ENCODE measurements at regions of chr11 and their contacts with region 1.

Region 1: DNA sequence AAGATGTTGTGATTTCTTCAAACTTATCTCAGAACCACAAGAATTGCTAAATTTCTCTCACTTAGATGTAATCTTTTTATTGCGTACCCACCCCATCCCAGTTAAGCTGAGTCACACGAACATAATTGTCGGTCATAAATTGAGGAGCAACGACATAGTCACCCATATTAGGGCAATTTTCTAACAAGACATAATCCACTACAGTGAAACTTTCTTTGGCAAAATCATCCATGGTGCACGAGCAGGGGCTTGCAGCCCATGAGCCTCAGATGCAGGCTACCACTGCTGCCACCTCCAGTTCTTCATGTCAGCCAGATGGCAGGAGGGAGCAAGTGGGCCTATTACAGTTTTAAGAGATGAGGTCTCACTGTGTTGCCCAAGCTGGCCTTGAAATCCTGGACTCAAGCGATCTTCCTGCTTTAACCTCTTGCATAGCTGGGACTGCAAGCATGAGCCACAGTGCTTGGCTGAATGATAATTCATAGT is 70.3 kb upstream of the GRK2 start:
- DNase-seq: peak; percentile 89
- H3K4me3 ChIP-seq: no peak overlapping the region
- H3K27me3 ChIP-seq: no peaks in the 10 kb centered on the region
- CTCF ChIP-seq: peak; percentile 25; the same call in 1 of the 2 replicates

Region 2: GRCh38 chr11:67126986-67127385 is 69.0 kb before region 1 on chr11:
- CTCF ChIA-PET with region 1: interaction called, 4 read pairs
- POLR2A ChIA-PET with region 1: interaction called, 11 read pairs
- DNase-seq: no peak
- H3K4me3 ChIP-seq: no peak overlapping the region
- H3K27me3 ChIP-seq: no peaks in the 10 kb centered on the region
- CTCF ChIP-seq: no peak

Region 3: GRCh38 chr11:67146516-67147226 is 49.3 kb before region 1 on chr11:
- CTCF ChIA-PET with region 1: no interaction called
- POLR2A ChIA-PET with region 1: no interaction called
- DNase-seq: no peak
- H3K4me3 ChIP-seq: no peak overlapping the region
- H3K27me3 ChIP-seq: no peaks in the 10 kb centered on the region
- CTCF ChIP-seq: no peak

Region 4: GRCh38 chr11:67303132-67303834 is 107.3 kb after region 1 on chr11 and contains the start of gene SSH3:
- CTCF ChIA-PET with region 1: no interaction called
- POLR2A ChIA-PET with region 1: no interaction called
- DNase-seq: no peak
- H3K4me3 ChIP-seq: peak within 1 kb of the TSS; percentile 72
- H3K27me3 ChIP-seq: no peaks in the 10 kb centered on the region
- CTCF ChIP-seq: no peak
- polyA plus RNA-seq, gene SSH3: 19.1 and 22.1 TPM in 2 replicates

Region 5: GRCh38 chr11:67373925-67374618 is 178.1 kb after region 1 on chr11:
- CTCF ChIA-PET with region 1: no interaction called
- POLR2A ChIA-PET with region 1: interaction called, 12 read pairs
- DNase-seq: peak; percentile 89
- H3K4me3 ChIP-seq: peak overlapping the region; percentile 72
- H3K27me3 ChIP-seq: no peaks in the 10 kb centered on the region
- CTCF ChIP-seq: peak; percentile 45

Region 6: GRCh38 chr11:67563354-67564114 is 367.5 kb after region 1 on chr11:
- CTCF ChIA-PET with region 1: no interaction called
- POLR2A ChIA-PET with region 1: no interaction called
- DNase-seq: peak; percentile 69
- H3K4me3 ChIP-seq: no peak overlapping the region
- H3K27me3 ChIP-seq: no peaks in the 10 kb centered on the region; the same call in 1 of the 2 replicates
- CTCF ChIP-seq: no peak

Measured in BJ (cell line).